ENCODE measurements at regions of chr20 and their contacts with region 1.

Region 1: GRCh38 chr20:11204926-11205768 is 531.3 kb upstream of the JAG1 start:
- DNase-seq: no peak
- H3K4me3 Mint-ChIP-seq: no peak overlapping the region
- H3K27ac Mint-ChIP-seq: no peak overlapping the region
- H3K4me1 Mint-ChIP-seq: no peaks in the 10 kb centered on the region
- H3K27me3 Mint-ChIP-seq: no peaks in the 10 kb centered on the region

Region 2: DNA sequence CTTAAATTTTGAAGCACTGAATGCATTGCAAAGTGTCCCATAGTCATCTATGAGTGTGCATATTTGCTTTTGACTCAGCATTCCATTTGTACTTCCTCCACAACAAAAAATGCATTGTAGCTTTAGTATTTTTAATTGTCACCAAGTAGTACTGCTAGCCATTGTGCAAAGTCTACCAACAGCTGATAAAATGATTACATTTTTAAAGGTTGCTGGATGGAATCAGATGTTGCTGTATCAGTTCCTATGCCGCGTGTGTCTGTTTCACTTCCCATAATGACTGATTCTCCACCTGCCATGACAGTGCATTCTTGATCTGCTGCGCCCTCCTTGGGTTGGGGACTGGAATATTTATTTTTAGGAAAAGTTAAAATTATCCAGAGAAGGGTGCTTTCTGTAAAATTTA is 728.8 kb before region 1 on chr20:
- intact Hi-C with region 1: loop called (anchors 10 kb)
- DNase-seq: no peak
- H3K4me3 Mint-ChIP-seq: no peak overlapping the region
- H3K27ac Mint-ChIP-seq: no peak overlapping the region
- H3K4me1 Mint-ChIP-seq: peaks cover 19% of the 10 kb centered on the region
- H3K27me3 Mint-ChIP-seq: no peaks in the 10 kb centered on the region

Region 3: GRCh38 chr20:11235058-11235457 is 29.9 kb after region 1 on chr20:
- intact Hi-C with region 1: no loop called
- DNase-seq: no peak
- H3K4me3 Mint-ChIP-seq: no peak overlapping the region
- H3K27ac Mint-ChIP-seq: no peak overlapping the region
- H3K4me1 Mint-ChIP-seq: no peaks in the 10 kb centered on the region
- H3K27me3 Mint-ChIP-seq: no peaks in the 10 kb centered on the region